ENCODE measurements at regions of chr14 and their contacts with region 1.

Region 1: GRCh38 chr14:21233457-21234076 is 35.7 kb downstream of the HNRNPC start:
- DNase-seq: no peak
- ATAC-seq: peak; percentile 39

Region 2: GRCh38 chr14:21192875-21193535 is 40.6 kb before region 1 on chr14:
- intact Hi-C with region 1: no loop called
- DNase-seq: no peak
- ATAC-seq: no peak

Region 3: DNA sequence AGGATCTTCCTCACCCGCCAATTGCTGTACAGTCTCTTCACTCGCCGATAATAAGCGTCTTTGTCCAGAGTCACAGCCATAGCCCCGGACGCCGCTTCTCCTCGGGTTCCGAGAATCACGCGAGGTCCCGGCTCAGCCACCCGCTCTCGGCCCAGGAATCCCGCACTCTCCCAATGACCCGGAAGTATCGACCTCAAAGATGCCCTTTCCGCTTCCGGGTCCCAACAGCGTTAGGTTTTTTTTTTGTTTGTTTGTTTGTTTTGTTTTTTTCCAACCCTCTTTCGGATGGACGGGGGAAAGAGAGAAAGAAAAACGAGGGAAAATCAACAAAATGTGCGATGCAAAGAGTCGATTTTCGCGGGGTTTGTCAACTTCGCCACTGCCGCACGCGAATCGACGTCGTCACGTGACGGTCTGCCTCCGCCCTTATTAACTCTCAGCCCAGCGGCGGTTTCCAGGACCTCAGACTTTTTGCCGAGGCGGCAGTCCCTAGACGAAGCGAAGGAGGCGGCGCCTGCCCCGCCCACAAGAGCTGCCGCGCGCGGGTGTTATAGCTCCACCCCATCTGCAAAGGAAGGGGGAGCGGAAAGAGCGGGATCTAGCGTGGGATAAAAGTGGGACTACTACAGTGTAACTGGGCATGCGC is 150.4 kb after region 1 on chr14 and contains the start of gene SUPT16H:
- intact Hi-C with region 1: loop called (anchors 10 kb)
- DNase-seq: peak; percentile 97
- ATAC-seq: peak; percentile 98
- total RNA-seq, gene SUPT16H: 28.5 TPM